Dorsolateral prefrontal cortex (tissue), 120 donors: ENCODE measurements at regions of chr20 and their contacts with region 1.

Region 1: GRCh38 chr20:45934586-45935415 is at the start of gene PCIF1:
- DNase-seq: peak; percentile 96 to 98 (median 97)
- H3K4me3 ChIP-seq: peak within 1 kb of the TSS; percentile 69 to 100 (median 97)
- H3K27ac ChIP-seq: peak within 1 kb of the TSS; percentile 98 to 100 (median 100)
- H3K27me3 ChIP-seq: no peaks in the 10 kb centered on the region
- CTCF ChIP-seq: peak in 25 of 56 donors; percentile 3 to 35 (median 19)
- total RNA-seq, gene PCIF1: 20.4 to 44.7 (median 32.2) TPM

Region 2: DNA sequence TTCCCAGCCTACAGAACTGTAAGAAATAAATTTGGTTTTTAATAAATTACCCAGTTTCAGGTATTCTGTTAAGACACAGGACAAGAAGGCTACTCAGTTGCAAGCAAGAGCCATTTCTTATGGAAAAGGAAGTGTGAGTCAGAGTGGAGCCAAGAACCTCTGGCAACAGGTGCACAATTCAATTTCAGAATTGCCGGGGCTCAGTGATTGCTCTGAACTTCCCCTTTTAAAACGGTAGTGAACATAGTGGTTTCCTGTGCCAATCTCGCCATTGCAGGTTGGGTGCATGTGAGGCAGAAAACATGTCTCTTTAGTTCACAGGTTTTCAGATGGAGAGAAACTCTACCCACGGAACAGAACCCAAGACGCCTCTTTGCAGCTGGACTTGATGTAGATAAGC is 502.5 kb before region 1 on chr20:
- intact Hi-C with region 1: no loop called
- DNase-seq: no peak
- H3K4me3 ChIP-seq: no peak overlapping the region
- H3K27ac ChIP-seq: peak overlapping the region in 58 of 59 donors; percentile 50 to 100 (median 95)
- H3K27me3 ChIP-seq: no peaks in the 10 kb centered on the region
- CTCF ChIP-seq: no peak

Region 3: DNA sequence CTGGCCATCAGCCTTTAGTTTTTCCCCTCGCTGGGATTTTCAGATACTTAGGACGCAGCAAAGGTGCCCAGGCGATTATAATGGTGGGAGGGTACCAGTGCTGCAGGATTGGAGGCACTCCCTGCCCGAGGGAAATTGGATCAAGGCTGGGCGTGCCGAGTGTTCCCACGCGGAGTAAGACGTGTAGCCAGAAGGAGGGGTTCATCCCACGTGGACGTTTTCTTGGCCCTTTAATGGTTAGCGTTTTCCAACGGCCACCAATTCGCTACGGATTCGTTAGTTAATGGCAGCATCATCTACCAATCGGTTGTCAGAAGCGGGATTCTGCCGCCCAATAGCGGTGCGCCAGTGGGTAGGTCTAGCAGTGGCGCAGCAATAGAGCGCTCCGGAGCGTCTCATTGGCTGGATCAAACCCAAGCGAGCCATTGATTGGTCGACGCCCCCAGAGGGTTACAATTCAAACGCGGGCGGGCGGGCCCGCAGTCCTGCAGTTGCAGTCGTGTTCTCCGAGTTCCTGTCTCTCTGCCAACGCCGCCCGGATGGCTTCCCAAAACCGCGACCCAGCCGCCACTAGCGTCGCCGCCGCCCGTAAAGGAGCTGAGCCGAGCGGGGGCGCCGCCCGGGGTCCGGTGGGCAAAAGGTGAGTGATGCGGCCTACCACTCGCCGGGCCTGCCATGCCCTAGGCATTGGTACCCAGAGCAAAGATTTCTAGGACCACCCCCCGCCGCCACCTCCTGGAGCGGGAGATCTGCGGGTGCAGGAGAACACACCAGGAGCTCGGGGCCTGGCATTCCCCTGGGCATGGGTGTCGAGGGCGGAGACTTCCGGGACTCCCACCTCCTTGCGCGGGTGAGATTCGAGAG is 122.4 kb before region 1 on chr20 and contains the start of gene UBE2C:
- intact Hi-C with region 1: loop called in 1 of 2 experiments (anchors 5 kb)
- DNase-seq: peak; percentile 95 to 100 (median 98)
- H3K4me3 ChIP-seq: peak within 1 kb of the TSS; percentile 36 to 83 (median 62)
- H3K27ac ChIP-seq: peak within 1 kb of the TSS in 9 of 59 donors; percentile 12 to 70 (median 34)
- H3K27me3 ChIP-seq: no peaks in the 10 kb centered on the region
- CTCF ChIP-seq: peak in 15 of 56 donors; percentile 7 to 33 (median 21)
- total RNA-seq, gene UBE2C: 0.62 to 2.7 (median 1.2) TPM in 12 of 120 experiments, not detected in the others

Region 4: GRCh38 chr20:45833030-45833882 is 101.5 kb before region 1 on chr20 and contains the start of gene SNX21:
- intact Hi-C with region 1: loop called in 1 of 2 experiments (anchors 10 kb)
- DNase-seq: peak in 9 of 10 donors; percentile 36 to 81 (median 63)
- H3K4me3 ChIP-seq: peak within 1 kb of the TSS; percentile 58 to 96 (median 80)
- H3K27ac ChIP-seq: peak within 1 kb of the TSS; percentile 56 to 98 (median 92)
- H3K27me3 ChIP-seq: no peaks in the 10 kb centered on the region
- CTCF ChIP-seq: peak in 2 of 56 donors; percentile 5 to 22
- total RNA-seq, gene SNX21: 24.9 to 65.9 (median 37.1) TPM

Region 5: GRCh38 chr20:45857114-45857881 is 77.5 kb before region 1 on chr20 and contains the starts of genes ACOT8 and ZSWIM3:
- intact Hi-C with region 1: loop called in 1 of 2 experiments (anchors 2 kb)
- DNase-seq: peak; percentile 75 to 98 (median 95)
- H3K4me3 ChIP-seq: peak within 1 kb of the TSS; percentile 68 to 100 (median 93)
- H3K27ac ChIP-seq: peak within 1 kb of the TSS in 58 of 59 donors; percentile 42 to 96 (median 85)
- H3K27me3 ChIP-seq: no peaks in the 10 kb centered on the region
- CTCF ChIP-seq: peak in 8 of 56 donors; percentile 5 to 35 (median 18)
- total RNA-seq, gene ACOT8: 27.3 to 54.9 (median 41.6) TPM
- total RNA-seq, gene ZSWIM3: 2.8 to 9.6 (median 6.0) TPM

Region 6: GRCh38 chr20:45890985-45891983 is 43.5 kb before region 1 on chr20 and contains the starts of genes CTSA and NEURL2:
- intact Hi-C with region 1: loop called (anchors 1 to 2 kb)
- DNase-seq: peak; percentile 91 to 96 (median 94)
- H3K4me3 ChIP-seq: peak within 1 kb of the TSS; percentile 71 to 100 (median 92)
- H3K27ac ChIP-seq: peak within 1 kb of the TSS; percentile 51 to 98 (median 91)
- H3K27me3 ChIP-seq: no peaks in the 10 kb centered on the region
- CTCF ChIP-seq: peak in 47 of 56 donors; percentile 8 to 66 (median 39)
- total RNA-seq, gene CTSA: 72.5 to 172 (median 116) TPM
- total RNA-seq, gene NEURL2: 3.3 to 19.6 (median 7.1) TPM

Region 7: GRCh38 chr20:45971675-45972499 is 37.1 kb after region 1 on chr20 and contains the start of gene ZNF335:
- intact Hi-C with region 1: loop called (anchors 1 to 2 kb)
- DNase-seq: peak; percentile 88 to 97 (median 94)
- H3K4me3 ChIP-seq: peak within 1 kb of the TSS; percentile 63 to 100 (median 90)
- H3K27ac ChIP-seq: peak within 1 kb of the TSS; percentile 97 to 100 (median 100)
- H3K27me3 ChIP-seq: no peaks in the 10 kb centered on the region
- CTCF ChIP-seq: peak in 53 of 56 donors; percentile 15 to 73 (median 54)
- total RNA-seq, gene ZNF335: 20.9 to 40.0 (median 26.7) TPM